ENCODE measurements at regions of chrX and their contacts with region 1.

Region 1: GRCh38 chrX:67338262-67338661 is 205.6 kb upstream of the AR start:
- DNase-seq: no peak

Region 2: GRCh38 chrX:66750769-66751764 is 587.2 kb before region 1 on chrX:
- intact Hi-C with region 1: loop called in 1 of 2 experiments (anchors 10 kb)
- DNase-seq: no peak

Measured in posterior vena cava (tissue), 2 donors.